SK-N-SH (cell line): ENCODE measurements at regions of chr18 and their contacts with region 1.

Region 1: GRCh38 chr18:7566567-7567473 is at the start of gene PTPRM:
- DNase-seq: peak; percentile 92
- H3K4me3 ChIP-seq: peak within 1 kb of the TSS; percentile 59 to 70
- H3K27ac ChIP-seq: peak within 1 kb of the TSS in 1 of 2 experiments; percentile 62; a peak in 2 of 4 replicates
- H3K4me1 ChIP-seq: peaks cover 0 to 9% of the 10 kb centered on the region in 2 experiments; a peak in 1 of 4 replicates
- H3K27me3 ChIP-seq: peaks cover 17% of the 10 kb centered on the region; the same call in 1 of the 2 replicates
- CTCF ChIP-seq: no peak
- EP300 ChIP-seq: no peak
- RAD21 ChIP-seq: peak; percentile 53
- polyA plus RNA-seq, gene PTPRM: 16.0 and 25.7 TPM in 2 replicates

Region 2: DNA sequence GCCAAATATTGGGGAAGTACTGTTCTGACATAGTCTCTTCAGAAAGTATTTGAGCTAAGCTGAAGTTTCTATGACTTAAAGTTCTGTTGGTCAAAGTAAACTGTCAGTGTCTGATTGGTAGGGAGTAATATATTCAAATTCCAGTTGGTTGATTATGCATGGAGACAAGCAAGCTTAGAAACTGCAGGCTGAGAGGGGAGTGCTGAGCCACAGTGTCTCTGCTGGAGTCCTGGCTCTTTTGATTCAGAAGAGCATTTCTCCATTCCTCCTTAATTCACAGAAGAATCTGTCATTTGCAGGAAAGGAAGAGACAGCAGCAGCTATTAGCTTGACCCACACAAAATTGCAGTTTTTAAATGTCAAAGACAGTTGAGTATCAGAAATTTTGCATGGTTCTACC is 1470.1 kb before region 1 on chr18:
- CTCF ChIA-PET with region 1: no interaction called
- POLR2A ChIA-PET with region 1: no interaction called
- DNase-seq: no peak
- H3K4me3 ChIP-seq: no peak overlapping the region
- H3K27ac ChIP-seq: no peak overlapping the region
- H3K4me1 ChIP-seq: no peaks in the 10 kb centered on the region
- H3K27me3 ChIP-seq: no peaks in the 10 kb centered on the region
- CTCF ChIP-seq: no peak
- EP300 ChIP-seq: no peak
- RAD21 ChIP-seq: no peak

Region 3: GRCh38 chr18:7237673-7238272 is 329.0 kb before region 1 on chr18:
- CTCF ChIA-PET with region 1: interaction called, 11 read pairs
- POLR2A ChIA-PET with region 1: no interaction called
- DNase-seq: peak; percentile 66
- H3K4me3 ChIP-seq: no peak overlapping the region; a peak in 1 of 4 replicates
- H3K27ac ChIP-seq: peak overlapping the region in 1 of 2 experiments; percentile 93; a peak in 2 of 4 replicates
- H3K4me1 ChIP-seq: peaks cover 0 to 16% of the 10 kb centered on the region in 2 experiments; a peak in 2 of 4 replicates
- H3K27me3 ChIP-seq: no peaks in the 10 kb centered on the region
- CTCF ChIP-seq: no peak
- EP300 ChIP-seq: peak in 1 of 2 experiments; percentile 66; a peak in 1 of 4 replicates
- RAD21 ChIP-seq: no peak

Region 4: GRCh38 chr18:7369006-7369405 is 197.8 kb before region 1 on chr18:
- CTCF ChIA-PET with region 1: interaction called, 12 read pairs
- POLR2A ChIA-PET with region 1: no interaction called
- DNase-seq: no peak
- H3K4me3 ChIP-seq: no peak overlapping the region
- H3K27ac ChIP-seq: no peak overlapping the region
- H3K4me1 ChIP-seq: peaks cover 0 to 10% of the 10 kb centered on the region in 2 experiments; a peak in 1 of 4 replicates
- H3K27me3 ChIP-seq: no peaks in the 10 kb centered on the region
- CTCF ChIP-seq: no peak
- EP300 ChIP-seq: no peak
- RAD21 ChIP-seq: no peak

Region 5: DNA sequence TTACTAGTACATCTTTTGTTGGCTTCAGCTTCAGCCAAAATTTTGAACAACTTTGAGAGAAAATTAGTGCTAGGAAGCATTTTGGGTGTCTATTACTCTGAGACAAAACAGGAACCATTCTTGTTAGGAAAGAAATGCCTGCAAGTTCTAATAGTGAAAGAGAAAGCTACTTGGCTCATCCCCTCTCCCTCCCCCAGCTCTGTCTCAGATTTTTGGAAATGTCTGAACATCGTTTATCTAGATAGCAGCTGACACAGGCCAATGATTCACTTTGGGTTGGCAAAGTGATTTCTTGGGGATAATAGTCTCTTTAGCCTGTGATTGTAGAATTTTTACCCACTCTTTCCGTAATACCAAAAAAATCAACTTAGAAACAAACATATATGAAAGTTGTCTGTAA is 42.0 kb before region 1 on chr18:
- CTCF ChIA-PET with region 1: interaction called, 13 read pairs
- POLR2A ChIA-PET with region 1: no interaction called
- DNase-seq: no peak
- H3K4me3 ChIP-seq: no peak overlapping the region
- H3K27ac ChIP-seq: no peak overlapping the region
- H3K4me1 ChIP-seq: peaks cover 0 to 3% of the 10 kb centered on the region in 2 experiments; a peak in 1 of 4 replicates
- H3K27me3 ChIP-seq: no peaks in the 10 kb centered on the region
- CTCF ChIP-seq: no peak
- EP300 ChIP-seq: no peak
- RAD21 ChIP-seq: no peak

Region 6: GRCh38 chr18:7666195-7666776 is 99.5 kb after region 1 on chr18:
- CTCF ChIA-PET with region 1: no interaction called
- POLR2A ChIA-PET with region 1: no interaction called
- DNase-seq: no peak
- H3K4me3 ChIP-seq: no peak overlapping the region
- H3K27ac ChIP-seq: no peak overlapping the region
- H3K4me1 ChIP-seq: no peaks in the 10 kb centered on the region; a peak in 1 of 4 replicates
- H3K27me3 ChIP-seq: no peaks in the 10 kb centered on the region
- CTCF ChIP-seq: no peak
- EP300 ChIP-seq: no peak
- RAD21 ChIP-seq: no peak

Region 7: DNA sequence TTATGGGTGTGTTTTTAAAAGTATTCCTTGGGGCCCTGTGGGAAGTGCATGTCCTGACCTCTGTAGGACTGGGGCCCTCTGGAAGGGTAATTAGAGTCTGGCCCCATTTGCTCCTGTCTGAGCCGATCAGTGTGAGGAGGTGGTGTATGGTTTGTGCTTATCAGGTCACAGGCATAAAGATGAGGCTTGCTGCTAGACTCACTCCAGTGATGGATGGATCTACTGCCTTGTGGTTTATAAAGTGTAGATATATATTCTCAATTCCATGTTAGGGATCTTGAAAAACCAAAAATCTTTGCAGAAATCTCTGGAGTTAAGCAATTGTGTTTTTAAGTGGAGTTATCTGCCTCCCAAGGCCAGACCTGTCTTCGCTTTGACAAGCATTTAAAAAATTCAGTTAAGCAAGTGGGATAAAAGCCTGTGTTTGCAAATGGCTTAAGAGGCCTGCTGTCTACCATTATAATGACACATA is 182.7 kb after region 1 on chr18:
- CTCF ChIA-PET with region 1: no interaction called
- POLR2A ChIA-PET with region 1: no interaction called
- DNase-seq: no peak
- H3K4me3 ChIP-seq: no peak overlapping the region
- H3K27ac ChIP-seq: peak overlapping the region in 1 of 2 experiments; percentile 75; a peak in 2 of 4 replicates
- H3K4me1 ChIP-seq: peaks cover 0 to 12% of the 10 kb centered on the region in 2 experiments; a peak in 2 of 4 replicates
- H3K27me3 ChIP-seq: no peaks in the 10 kb centered on the region
- CTCF ChIP-seq: no peak
- EP300 ChIP-seq: no peak
- RAD21 ChIP-seq: no peak

Region 8: GRCh38 chr18:7766346-7766745 is 199.5 kb after region 1 on chr18:
- CTCF ChIA-PET with region 1: interaction called, 11 read pairs
- POLR2A ChIA-PET with region 1: no interaction called
- DNase-seq: peak; percentile 43
- H3K4me3 ChIP-seq: no peak overlapping the region
- H3K27ac ChIP-seq: peak overlapping the region in 1 of 2 experiments; percentile 73; a peak in 2 of 4 replicates
- H3K4me1 ChIP-seq: peaks cover 0 to 14% of the 10 kb centered on the region in 2 experiments; a peak in 2 of 4 replicates
- H3K27me3 ChIP-seq: no peaks in the 10 kb centered on the region
- CTCF ChIP-seq: no peak
- EP300 ChIP-seq: no peak
- RAD21 ChIP-seq: no peak

Region 9: DNA sequence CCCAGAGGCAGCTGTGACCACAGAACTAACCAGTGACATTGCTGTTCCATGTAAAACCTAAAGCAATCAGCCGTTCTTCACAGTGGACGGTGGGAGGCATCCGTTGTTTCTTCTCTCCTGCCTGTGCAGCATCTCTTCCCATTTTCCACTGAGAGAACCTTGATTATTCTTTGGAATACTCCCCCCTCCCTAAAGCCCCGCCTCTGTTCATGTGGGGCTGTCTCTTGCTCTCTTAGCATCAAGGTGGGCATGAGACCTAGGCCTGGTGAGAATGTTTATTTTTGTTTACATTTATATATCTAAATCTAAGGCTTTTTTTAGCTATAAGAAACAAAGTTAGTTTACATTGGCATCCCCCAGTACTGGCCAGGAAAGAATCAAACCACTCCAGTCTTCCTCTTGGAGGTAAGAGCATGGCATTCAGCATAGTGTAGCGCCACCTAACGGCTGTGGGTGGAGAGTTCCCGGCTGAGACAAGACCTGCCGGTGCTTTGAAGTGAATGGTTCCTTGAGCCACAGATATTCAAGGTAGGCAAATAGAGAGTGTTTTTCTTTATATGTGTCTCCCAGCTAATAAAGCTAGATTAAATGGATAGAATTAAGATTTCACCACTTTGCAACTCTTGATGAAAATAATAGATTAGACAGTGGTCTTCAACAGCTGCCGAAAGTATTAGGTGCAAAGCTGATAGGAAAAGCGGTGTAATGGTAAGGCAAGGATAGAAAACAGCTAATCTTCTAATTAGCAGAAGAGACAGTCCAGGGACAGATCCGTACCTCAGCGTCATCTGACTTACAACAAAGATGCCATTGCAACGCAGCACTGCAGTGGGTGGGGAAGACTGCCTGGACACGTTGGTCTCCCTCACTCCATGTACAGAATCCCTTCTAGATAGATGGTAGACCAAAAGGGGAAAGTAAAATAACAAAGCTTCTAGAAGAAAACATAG is 822.8 kb after region 1 on chr18:
- CTCF ChIA-PET with region 1: interaction called, 11 read pairs
- POLR2A ChIA-PET with region 1: no interaction called
- DNase-seq: peak; percentile 72
- H3K4me3 ChIP-seq: peak overlapping the region in 1 of 2 experiments; percentile 47; a peak in 1 of 4 replicates
- H3K27ac ChIP-seq: peak overlapping the region in 1 of 2 experiments; percentile 50; a peak in 1 of 4 replicates
- H3K4me1 ChIP-seq: peaks cover 0 to 6% of the 10 kb centered on the region in 2 experiments; a peak in 1 of 4 replicates
- H3K27me3 ChIP-seq: no peaks in the 10 kb centered on the region
- CTCF ChIP-seq: peak; percentile 81
- EP300 ChIP-seq: no peak
- RAD21 ChIP-seq: peak; percentile 92

Region 10: GRCh38 chr18:8706764-8707555 is 1140.1 kb after region 1 on chr18:
- CTCF ChIA-PET with region 1: no interaction called
- POLR2A ChIA-PET with region 1: no interaction called
- DNase-seq: peak; percentile 67
- H3K4me3 ChIP-seq: peak overlapping the region; percentile 83 to 97
- H3K27ac ChIP-seq: peak overlapping the region in 1 of 2 experiments; percentile 17; a peak in 1 of 4 replicates
- H3K4me1 ChIP-seq: peaks cover 9 to 23% of the 10 kb centered on the region in 2 experiments
- H3K27me3 ChIP-seq: no peaks in the 10 kb centered on the region
- CTCF ChIP-seq: peak; percentile 51
- EP300 ChIP-seq: no peak
- RAD21 ChIP-seq: peak; percentile 47